CD4-positive, alpha-beta memory T cell (primary cell): ENCODE measurements at regions of chr15 and their contacts with region 1.

Region 1: DNA sequence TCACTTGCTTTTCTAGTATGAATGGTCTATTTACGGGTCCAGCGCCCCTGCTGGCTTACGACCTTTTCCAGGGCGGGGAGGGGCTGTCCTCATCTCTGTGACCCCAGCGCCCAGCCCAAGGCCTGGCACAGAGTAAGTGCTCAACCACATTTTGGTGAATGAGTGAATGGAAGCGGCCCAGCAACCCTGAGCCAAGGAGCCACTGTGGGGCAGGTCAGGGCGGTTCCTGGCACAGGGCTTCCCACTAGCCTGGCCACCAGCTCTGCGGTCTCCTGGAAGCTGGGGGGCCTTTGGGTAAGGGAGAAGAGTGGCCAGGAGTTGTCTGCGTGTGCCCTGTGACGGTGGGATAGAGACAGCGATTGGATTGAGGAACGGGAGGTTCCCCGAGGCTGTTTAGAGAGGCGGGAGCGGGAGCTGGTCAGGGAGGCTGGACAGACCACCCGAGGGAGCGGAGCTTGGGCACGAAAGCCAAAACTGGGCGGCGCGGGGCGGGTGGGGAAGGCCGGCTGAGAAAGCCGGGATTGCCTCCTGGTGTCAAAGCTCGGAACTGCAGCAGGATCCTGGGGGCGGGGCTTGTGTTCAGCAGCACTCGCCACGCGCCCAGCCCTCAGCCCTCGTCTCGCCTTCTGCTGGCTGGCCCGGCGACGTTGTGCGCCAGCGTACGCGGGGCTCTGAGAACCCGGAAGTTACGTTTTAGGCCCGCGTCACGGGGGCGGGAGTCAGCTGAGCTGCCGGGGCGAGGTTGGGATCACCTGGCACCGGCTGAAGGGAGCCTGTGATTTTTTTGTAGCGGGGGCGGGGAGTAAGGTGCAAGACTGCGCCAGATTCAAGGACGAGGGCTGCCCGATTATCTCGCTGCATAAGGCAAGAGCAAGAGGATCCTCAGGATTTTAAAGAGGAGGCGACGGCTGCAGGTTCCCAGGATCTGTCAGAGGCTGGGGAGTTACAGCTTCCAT is at the start of gene VPS18:
- DNase-seq: peak; percentile 97 to 98 (median 98)
- H3K4me3 ChIP-seq: peak within 1 kb of the TSS; percentile 53 to 86
- H3K4me3 Mint-ChIP-seq: peak within 1 kb of the TSS; percentile 95 to 100 (median 99)
- H3K27ac ChIP-seq: peak within 1 kb of the TSS; percentile 86
- H3K27ac Mint-ChIP-seq: peak within 1 kb of the TSS; percentile 95 to 99 (median 99)
- H3K4me1 ChIP-seq: peaks cover 21% of the 10 kb centered on the region
- H3K4me1 Mint-ChIP-seq: peaks cover 24 to 52% (median 36%) of the 10 kb centered on the region in 4 donors
- H3K27me3 ChIP-seq: no peaks in the 10 kb centered on the region
- H3K27me3 Mint-ChIP-seq: no peaks in the 10 kb centered on the region
- total RNA-seq, gene VPS18: 18.4 to 20.3 TPM

Region 2: DNA sequence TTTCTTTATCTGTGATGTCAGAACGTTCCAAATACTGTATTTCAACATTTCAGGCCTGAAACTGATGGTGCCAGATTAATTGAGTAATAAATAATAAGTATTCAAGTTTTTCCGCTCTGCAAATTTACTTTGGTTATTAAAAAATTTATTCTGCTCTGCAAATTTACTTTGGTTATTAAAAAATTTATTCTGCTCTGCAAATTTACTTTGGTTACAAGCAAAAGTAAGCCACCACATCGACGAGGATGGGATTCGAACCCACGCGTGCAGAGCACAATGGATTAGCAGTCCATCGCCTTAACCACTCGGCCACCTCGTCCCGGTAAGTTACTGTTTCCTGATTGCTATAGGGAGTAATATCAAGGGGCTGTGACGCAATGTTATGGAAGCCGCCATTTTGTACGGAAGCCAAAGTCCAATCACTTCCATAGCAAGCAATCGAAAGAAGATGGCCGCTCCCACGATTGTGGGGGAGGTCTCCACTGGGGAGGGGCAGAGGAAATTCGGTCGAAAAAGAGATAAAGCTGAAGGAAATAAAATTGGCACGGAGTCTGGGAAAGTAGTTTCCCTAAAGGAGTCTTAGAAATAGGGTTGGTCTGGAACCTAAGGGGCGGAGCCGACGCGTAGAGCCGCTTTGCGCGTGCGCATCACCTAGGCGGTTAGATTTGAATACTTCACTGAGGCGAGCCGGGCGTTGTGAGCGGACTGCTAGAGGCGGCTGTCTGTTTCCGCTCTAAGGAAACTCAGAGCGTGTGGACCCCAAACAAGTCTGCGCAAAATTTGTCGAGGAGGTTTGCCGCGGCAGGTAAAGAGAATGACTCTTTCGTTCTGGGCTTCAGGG is 300.2 kb before region 1 on chr15 and contains the start of gene KNL1:
- CTCF ChIA-PET with region 1: interaction called, 6 read pairs
- POLR2A ChIA-PET with region 1: interaction called, 3 read pairs
- intact Hi-C with region 1: loop called (anchors 1 kb)
- DNase-seq: peak; percentile 89 to 93 (median 91)
- H3K4me3 ChIP-seq: peak within 1 kb of the TSS; percentile 36 to 94
- H3K4me3 Mint-ChIP-seq: peak within 1 kb of the TSS; percentile 93 to 100 (median 96)
- H3K27ac ChIP-seq: peak within 1 kb of the TSS; percentile 90
- H3K27ac Mint-ChIP-seq: peak within 1 kb of the TSS; percentile 96 to 100 (median 99)
- H3K4me1 ChIP-seq: peaks cover 31% of the 10 kb centered on the region
- H3K4me1 Mint-ChIP-seq: peaks cover 18 to 46% (median 31%) of the 10 kb centered on the region in 4 donors
- H3K27me3 ChIP-seq: no peaks in the 10 kb centered on the region
- H3K27me3 Mint-ChIP-seq: peaks cover 0 to 2% of the 10 kb centered on the region in 2 donors
- total RNA-seq, gene KNL1: 0.99 to 1.2 TPM

Region 3: GRCh38 chr15:40754883-40755811 is 138.9 kb before region 1 on chr15 and contains the start of gene RMDN3:
- CTCF ChIA-PET with region 1: interaction called, 3 read pairs
- POLR2A ChIA-PET with region 1: no interaction called
- intact Hi-C with region 1: loop called (anchors 2 kb)
- DNase-seq: peak; percentile 90 to 93 (median 92)
- H3K4me3 ChIP-seq: peak within 1 kb of the TSS; percentile 65 to 96
- H3K4me3 Mint-ChIP-seq: peak within 1 kb of the TSS; percentile 91 to 99 (median 94)
- H3K27ac ChIP-seq: peak within 1 kb of the TSS; percentile 85
- H3K27ac Mint-ChIP-seq: peak within 1 kb of the TSS; percentile 82 to 98 (median 95)
- H3K4me1 ChIP-seq: peaks cover 31% of the 10 kb centered on the region
- H3K4me1 Mint-ChIP-seq: peaks cover 11 to 40% (median 26%) of the 10 kb centered on the region in 4 donors
- H3K27me3 ChIP-seq: no peaks in the 10 kb centered on the region
- H3K27me3 Mint-ChIP-seq: no peaks in the 10 kb centered on the region
- total RNA-seq, gene RMDN3: 24.5 to 26.7 TPM

Region 4: DNA sequence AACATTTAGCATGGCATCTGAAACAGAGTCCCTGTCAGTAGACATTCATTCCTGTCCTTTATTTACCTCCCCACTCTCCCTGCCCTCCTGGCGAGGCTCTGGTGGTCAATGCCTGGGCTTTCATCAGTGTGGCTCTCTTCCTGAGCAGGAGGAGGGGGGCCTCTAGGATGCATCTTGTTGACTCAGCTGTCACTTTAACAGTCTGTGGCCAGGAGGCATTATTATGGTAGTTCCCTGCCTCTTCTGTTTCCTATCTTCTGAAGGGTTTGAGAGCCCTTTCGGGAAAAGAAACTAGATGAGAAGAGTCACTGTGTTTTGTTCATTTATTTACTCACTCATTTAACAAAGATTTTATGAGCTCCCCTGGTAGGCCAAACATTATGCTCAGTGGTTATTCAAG is 63.1 kb before region 1 on chr15:
- CTCF ChIA-PET with region 1: no interaction called
- POLR2A ChIA-PET with region 1: no interaction called
- intact Hi-C with region 1: no loop called
- DNase-seq: no peak
- H3K4me3 ChIP-seq: no peak overlapping the region
- H3K4me3 Mint-ChIP-seq: no peak overlapping the region
- H3K27ac ChIP-seq: no peak overlapping the region
- H3K27ac Mint-ChIP-seq: no peak overlapping the region
- H3K4me1 ChIP-seq: no peaks in the 10 kb centered on the region
- H3K4me1 Mint-ChIP-seq: no peaks in the 10 kb centered on the region
- H3K27me3 ChIP-seq: no peaks in the 10 kb centered on the region
- H3K27me3 Mint-ChIP-seq: no peaks in the 10 kb centered on the region

Region 5: GRCh38 chr15:40873625-40874561 is 20.1 kb before region 1 on chr15 and contains the start of gene RHOV:
- CTCF ChIA-PET with region 1: interaction called, 15 read pairs
- POLR2A ChIA-PET with region 1: interaction called, 3 read pairs
- intact Hi-C with region 1: no loop called
- DNase-seq: peak; percentile 31 to 62 (median 37)
- H3K4me3 ChIP-seq: peak within 1 kb of the TSS in 1 of 2 donors; percentile 44
- H3K4me3 Mint-ChIP-seq: peak within 1 kb of the TSS; percentile 78 to 93 (median 88)
- H3K27ac ChIP-seq: no peak within 1 kb of the TSS
- H3K27ac Mint-ChIP-seq: no peak within 1 kb of the TSS
- H3K4me1 ChIP-seq: peaks cover 6% of the 10 kb centered on the region
- H3K4me1 Mint-ChIP-seq: peaks cover 2 to 19% (median 8%) of the 10 kb centered on the region in 4 donors
- H3K27me3 ChIP-seq: no peaks in the 10 kb centered on the region
- H3K27me3 Mint-ChIP-seq: peaks cover 1% of the 10 kb centered on the region in 2 donors
- total RNA-seq, gene RHOV: not detected

Region 6: GRCh38 chr15:40941528-40942336 is 47.7 kb after region 1 on chr15:
- CTCF ChIA-PET with region 1: interaction called, 10 read pairs
- POLR2A ChIA-PET with region 1: interaction called, 3 read pairs
- intact Hi-C with region 1: no loop called
- DNase-seq: peak; percentile 62 to 73 (median 67)
- H3K4me3 ChIP-seq: peak overlapping the region; percentile 58 to 83
- H3K4me3 Mint-ChIP-seq: peak overlapping the region; percentile 75 to 87 (median 84)
- H3K27ac ChIP-seq: peak overlapping the region; percentile 64
- H3K27ac Mint-ChIP-seq: peak overlapping the region in 6 of 7 donors; percentile 66 to 94 (median 87)
- H3K4me1 ChIP-seq: peaks cover 27% of the 10 kb centered on the region
- H3K4me1 Mint-ChIP-seq: peaks cover 13 to 40% (median 31%) of the 10 kb centered on the region in 4 donors
- H3K27me3 ChIP-seq: no peaks in the 10 kb centered on the region
- H3K27me3 Mint-ChIP-seq: no peaks in the 10 kb centered on the region

Region 7: GRCh38 chr15:41465822-41466421 is 571.9 kb after region 1 on chr15:
- CTCF ChIA-PET with region 1: no interaction called
- POLR2A ChIA-PET with region 1: no interaction called
- intact Hi-C with region 1: no loop called
- DNase-seq: peak in 4 of 5 donors; percentile 37 to 56 (median 44)
- H3K4me3 ChIP-seq: no peak overlapping the region
- H3K4me3 Mint-ChIP-seq: no peak overlapping the region
- H3K27ac ChIP-seq: no peak overlapping the region
- H3K27ac Mint-ChIP-seq: peak overlapping the region in 3 of 7 donors; percentile 24 to 89 (median 49)
- H3K4me1 ChIP-seq: no peaks in the 10 kb centered on the region
- H3K4me1 Mint-ChIP-seq: peaks cover 0 to 7% (median 4%) of the 10 kb centered on the region in 4 donors
- H3K27me3 ChIP-seq: no peaks in the 10 kb centered on the region
- H3K27me3 Mint-ChIP-seq: no peaks in the 10 kb centered on the region

Region 8: GRCh38 chr15:42384597-42384996 is 1490.6 kb after region 1 on chr15:
- CTCF ChIA-PET with region 1: no interaction called
- POLR2A ChIA-PET with region 1: no interaction called
- intact Hi-C with region 1: no loop called
- DNase-seq: no peak
- H3K4me3 ChIP-seq: no peak overlapping the region
- H3K4me3 Mint-ChIP-seq: no peak overlapping the region
- H3K27ac ChIP-seq: no peak overlapping the region
- H3K27ac Mint-ChIP-seq: no peak overlapping the region
- H3K4me1 ChIP-seq: no peaks in the 10 kb centered on the region
- H3K4me1 Mint-ChIP-seq: no peaks in the 10 kb centered on the region
- H3K27me3 ChIP-seq: no peaks in the 10 kb centered on the region
- H3K27me3 Mint-ChIP-seq: no peaks in the 10 kb centered on the region